Psoas muscle (tissue), 8 donors: ENCODE measurements at regions of chr13 and their contacts with region 1.

Region 1: DNA sequence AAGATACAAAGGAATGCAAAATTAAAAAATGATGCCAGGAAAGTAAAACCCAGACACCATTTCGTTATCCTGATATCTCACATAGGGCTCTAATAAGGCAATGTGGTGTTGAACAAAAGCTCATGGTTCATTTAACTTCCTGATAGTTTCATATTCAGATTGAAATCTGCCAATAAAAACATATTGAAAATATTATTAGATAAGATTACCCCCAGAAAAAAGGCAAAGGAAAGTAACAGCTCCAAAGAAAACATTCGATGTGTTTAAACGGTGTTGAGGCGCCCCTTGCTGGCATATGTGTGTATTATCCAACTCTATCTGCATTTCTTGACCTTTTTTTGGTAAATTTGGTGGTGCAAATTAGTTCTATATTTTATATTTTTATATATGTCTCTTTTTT is 75.9 kb downstream of the ESD start:
- DNase-seq: peak in 1 of 2 donors; percentile 39
- ATAC-seq: peak in 2 of 4 donors; percentile 56 to 74
- H3K4me3 ChIP-seq: no peak overlapping the region
- H3K27ac ChIP-seq: no peak overlapping the region
- H3K4me1 ChIP-seq: no peaks in the 10 kb centered on the region
- H3K27me3 ChIP-seq: no peaks in the 10 kb centered on the region
- CTCF ChIP-seq: peak; percentile 70

Region 2: DNA sequence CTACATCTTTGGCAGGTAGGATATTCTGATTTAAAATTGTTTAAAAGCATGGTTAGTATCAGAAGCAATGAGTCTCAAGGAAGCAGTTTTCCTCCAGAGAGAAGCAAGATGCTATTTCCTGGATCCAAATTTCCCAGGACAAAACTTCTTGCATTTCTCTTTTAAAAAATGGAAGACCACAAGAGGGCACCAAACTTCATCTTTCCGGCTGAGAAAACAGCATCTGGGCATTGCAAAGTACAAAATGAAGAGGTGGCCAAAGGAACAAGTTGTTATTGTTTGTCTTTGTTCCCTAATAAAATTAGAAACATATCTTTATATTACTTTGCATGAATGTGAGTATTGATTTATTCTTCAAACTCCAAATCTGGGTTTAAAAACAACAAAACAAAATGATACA is 228.1 kb before region 1 on chr13:
- intact Hi-C with region 1: loop called (anchors 2 to 5 kb)
- DNase-seq: no peak
- ATAC-seq: peak in 1 of 4 donors; percentile 44
- H3K4me3 ChIP-seq: no peak overlapping the region
- H3K27ac ChIP-seq: no peak overlapping the region
- H3K4me1 ChIP-seq: no peaks in the 10 kb centered on the region
- H3K27me3 ChIP-seq: no peaks in the 10 kb centered on the region
- CTCF ChIP-seq: peak; percentile 67